ENCODE measurements at regions of chr20 and their contacts with region 1.

Region 1: DNA sequence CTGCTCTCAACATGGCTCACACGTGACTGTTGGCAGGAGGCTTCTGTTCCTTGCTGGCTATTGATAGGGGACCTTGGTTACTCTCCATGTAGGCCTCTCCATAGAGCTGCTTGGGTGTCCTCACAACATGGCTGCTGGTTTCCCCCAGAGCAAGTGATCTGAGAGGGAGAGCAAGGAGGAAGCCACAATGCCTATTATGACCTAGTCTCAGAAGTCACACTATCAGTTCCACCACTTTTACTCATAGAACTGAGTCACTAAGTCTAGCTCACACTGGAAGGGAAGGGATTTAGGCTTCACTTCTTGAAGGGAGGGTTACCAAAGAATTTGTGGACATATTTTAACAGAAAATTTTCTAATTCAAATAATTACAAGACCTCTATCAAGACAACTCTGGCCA is 8.7 kb upstream of the NOP56 start:
- DNase-seq: no peak
- ATAC-seq: no peak
- H3K4me3 ChIP-seq: no peak overlapping the region
- H3K27ac ChIP-seq: no peak overlapping the region
- H3K4me1 ChIP-seq: no peaks in the 10 kb centered on the region
- H3K27me3 ChIP-seq: no peaks in the 10 kb centered on the region

Region 2: GRCh38 chr20:2523919-2524708 is 119.6 kb before region 1 on chr20:
- intact Hi-C with region 1: loop called in 2 of 4 experiments (anchors 5 to 10 kb)
- DNase-seq: peak; percentile 87 to 95 (median 94)
- ATAC-seq: peak; percentile 83 to 85
- H3K4me3 ChIP-seq: peak overlapping the region; percentile 80
- H3K27ac ChIP-seq: peak overlapping the region; percentile 82
- H3K4me1 ChIP-seq: no peaks in the 10 kb centered on the region
- H3K27me3 ChIP-seq: no peaks in the 10 kb centered on the region

Region 3: GRCh38 chr20:2538931-2539720 is 104.6 kb before region 1 on chr20:
- intact Hi-C with region 1: loop called in 1 of 4 experiments (anchors 10 kb)
- DNase-seq: no peak
- ATAC-seq: no peak
- H3K4me3 ChIP-seq: no peak overlapping the region
- H3K27ac ChIP-seq: no peak overlapping the region
- H3K4me1 ChIP-seq: no peaks in the 10 kb centered on the region
- H3K27me3 ChIP-seq: no peaks in the 10 kb centered on the region

Region 4: GRCh38 chr20:2697768-2698167 is 54.1 kb after region 1 on chr20:
- intact Hi-C with region 1: no loop called
- DNase-seq: no peak
- ATAC-seq: no peak
- H3K4me3 ChIP-seq: no peak overlapping the region
- H3K27ac ChIP-seq: no peak overlapping the region
- H3K4me1 ChIP-seq: no peaks in the 10 kb centered on the region
- H3K27me3 ChIP-seq: no peaks in the 10 kb centered on the region

Measured in right cardiac atrium (tissue), 5 donors.